ENCODE measurements at regions of chr3 and their contacts with region 1.

Region 1: GRCh38 chr3:99499235-99500158 is 138.9 kb upstream of the COL8A1 start:
- DNase-seq: peak; percentile 24
- H3K4me3 ChIP-seq: no peak overlapping the region
- H3K27ac ChIP-seq: no peak overlapping the region
- H3K4me1 ChIP-seq: no peaks in the 10 kb centered on the region
- H3K27me3 ChIP-seq: no peaks in the 10 kb centered on the region
- CTCF ChIP-seq: peak; percentile 68

Region 2: GRCh38 chr3:99562138-99562537 is 62.6 kb after region 1 on chr3:
- intact Hi-C with region 1: no loop called
- DNase-seq: no peak
- H3K4me3 ChIP-seq: no peak overlapping the region
- H3K27ac ChIP-seq: no peak overlapping the region
- H3K4me1 ChIP-seq: no peaks in the 10 kb centered on the region
- H3K27me3 ChIP-seq: no peaks in the 10 kb centered on the region
- CTCF ChIP-seq: no peak

Region 3: DNA sequence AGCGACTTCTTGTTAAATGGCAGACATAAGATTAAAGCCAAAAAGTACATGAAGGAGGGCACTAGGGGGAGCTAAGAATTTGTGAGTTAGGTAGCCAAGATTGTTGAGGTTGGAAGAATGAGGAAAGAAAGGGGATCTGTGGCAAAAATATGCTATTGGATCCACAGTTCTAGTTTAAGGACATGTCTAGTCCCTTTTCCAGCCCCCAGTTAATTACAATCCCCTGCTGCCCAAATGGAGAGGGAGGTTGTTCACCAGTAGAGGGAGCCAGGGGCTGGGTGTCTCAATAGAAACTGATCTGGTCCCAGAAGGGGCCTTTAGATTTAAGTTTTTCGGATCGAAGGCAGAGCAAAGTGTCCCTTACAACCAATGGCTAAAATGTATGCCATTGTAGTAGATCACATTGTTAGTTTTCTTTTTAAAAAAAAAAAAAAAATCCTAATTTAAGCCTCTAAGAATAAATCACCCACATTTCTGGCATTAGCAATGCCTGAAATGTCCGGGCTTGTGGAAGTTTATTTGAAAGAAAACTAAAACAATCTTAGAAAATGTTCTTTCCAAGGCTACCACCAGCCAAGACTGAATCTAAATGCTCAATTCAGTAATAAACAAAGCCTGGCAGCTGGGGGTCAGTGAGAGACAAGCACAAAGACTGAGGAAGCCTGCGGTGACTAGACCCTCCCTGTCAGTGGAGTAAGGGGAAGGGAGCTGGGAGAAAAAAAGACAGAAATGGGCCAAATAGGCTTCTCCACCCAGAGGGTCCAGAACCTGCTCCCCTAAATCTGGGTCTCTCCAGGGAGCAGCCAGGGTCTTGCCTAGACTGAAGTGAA is 146.0 kb after region 1 on chr3:
- intact Hi-C with region 1: no loop called
- DNase-seq: peak; percentile 21
- H3K4me3 ChIP-seq: no peak overlapping the region
- H3K27ac ChIP-seq: no peak overlapping the region
- H3K4me1 ChIP-seq: no peaks in the 10 kb centered on the region
- H3K27me3 ChIP-seq: no peaks in the 10 kb centered on the region
- CTCF ChIP-seq: peak; percentile 50

Region 4: DNA sequence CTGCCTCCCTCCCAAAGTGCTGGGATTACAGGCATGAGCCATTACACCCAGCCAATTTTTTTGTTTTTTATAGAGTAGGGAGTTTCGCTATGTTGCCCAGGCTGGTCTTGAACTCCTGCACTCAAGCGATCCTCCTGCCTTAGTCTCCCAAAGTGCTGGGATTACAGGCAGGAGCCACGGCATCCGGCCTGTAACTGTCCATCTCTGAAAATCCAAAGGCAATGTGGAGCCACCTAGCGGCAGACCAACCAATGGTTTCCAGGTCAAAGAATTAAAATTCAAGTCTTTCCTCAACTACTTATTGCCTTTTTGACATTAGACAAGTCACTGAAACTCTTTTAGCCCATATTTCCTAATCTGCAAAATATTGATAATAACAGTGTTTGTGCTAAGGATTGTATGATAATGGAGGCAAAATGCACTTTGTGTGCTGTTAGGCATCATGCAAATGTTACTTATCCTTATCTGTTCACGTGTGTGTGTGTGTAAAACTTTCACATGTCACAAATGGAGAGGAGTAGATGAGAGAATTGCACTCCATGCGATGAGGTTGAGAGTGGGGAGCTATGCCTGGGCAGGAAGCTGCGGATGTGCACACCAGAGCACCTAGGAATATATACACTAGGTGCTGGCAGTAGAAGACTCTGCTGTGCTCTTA is 187.6 kb after region 1 on chr3:
- intact Hi-C with region 1: loop called (anchors 10 kb)
- DNase-seq: peak; percentile 67
- H3K4me3 ChIP-seq: no peak overlapping the region
- H3K27ac ChIP-seq: no peak overlapping the region
- H3K4me1 ChIP-seq: no peaks in the 10 kb centered on the region
- H3K27me3 ChIP-seq: no peaks in the 10 kb centered on the region
- CTCF ChIP-seq: peak; percentile 61

Region 5: DNA sequence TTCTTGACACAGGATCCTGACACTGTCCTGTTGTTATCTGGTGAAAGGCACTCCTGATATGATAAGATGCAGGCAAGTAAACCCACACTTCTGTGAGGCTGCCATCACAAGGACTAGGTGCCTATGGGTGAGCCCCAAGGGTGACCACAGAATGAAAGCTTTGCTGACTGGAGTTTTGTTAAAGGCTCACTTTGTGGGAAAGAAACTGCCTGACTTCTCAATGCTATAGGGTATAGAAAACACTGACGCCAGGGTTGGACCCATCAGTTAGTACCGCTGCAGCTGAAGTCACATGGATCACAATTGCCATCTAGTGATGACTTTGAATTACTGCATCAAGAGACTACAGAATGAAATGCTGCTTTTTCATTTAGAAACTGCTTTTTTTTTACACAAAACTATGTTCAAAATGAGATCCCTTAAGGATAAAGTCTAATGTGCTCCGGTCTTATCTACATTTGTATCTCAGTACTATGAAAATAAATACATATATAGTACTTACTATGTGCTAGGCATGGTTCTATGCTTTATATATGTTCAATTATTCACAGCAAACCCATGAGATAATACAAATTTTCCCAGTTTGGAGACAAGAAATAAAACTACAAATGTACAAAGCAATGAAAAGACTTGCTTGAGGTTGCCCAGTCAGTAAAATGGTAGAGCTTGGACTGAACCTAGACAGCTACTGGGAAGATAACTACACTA is 253.9 kb after region 1 on chr3:
- intact Hi-C with region 1: loop called (anchors 10 kb)
- DNase-seq: no peak
- H3K4me3 ChIP-seq: no peak overlapping the region
- H3K27ac ChIP-seq: no peak overlapping the region
- H3K4me1 ChIP-seq: no peaks in the 10 kb centered on the region
- H3K27me3 ChIP-seq: no peaks in the 10 kb centered on the region
- CTCF ChIP-seq: peak; percentile 71